Transverse colon (tissue), 4 donors: ENCODE measurements at regions of chr10 and their contacts with region 1.

Region 1: GRCh38 chr10:69728335-69728870 is 73.3 kb upstream of the COL13A1 start:
- DNase-seq: no peak
- H3K4me3 ChIP-seq: no peak overlapping the region
- H3K27ac ChIP-seq: no peak overlapping the region
- H3K4me1 ChIP-seq: peaks cover 0 to 8% (median 0%) of the 10 kb centered on the region in 4 donors
- H3K27me3 ChIP-seq: no peaks in the 10 kb centered on the region
- CTCF ChIP-seq: no peak
- EP300 ChIP-seq: no peak
- POLR2A ChIP-seq: no peak

Region 2: DNA sequence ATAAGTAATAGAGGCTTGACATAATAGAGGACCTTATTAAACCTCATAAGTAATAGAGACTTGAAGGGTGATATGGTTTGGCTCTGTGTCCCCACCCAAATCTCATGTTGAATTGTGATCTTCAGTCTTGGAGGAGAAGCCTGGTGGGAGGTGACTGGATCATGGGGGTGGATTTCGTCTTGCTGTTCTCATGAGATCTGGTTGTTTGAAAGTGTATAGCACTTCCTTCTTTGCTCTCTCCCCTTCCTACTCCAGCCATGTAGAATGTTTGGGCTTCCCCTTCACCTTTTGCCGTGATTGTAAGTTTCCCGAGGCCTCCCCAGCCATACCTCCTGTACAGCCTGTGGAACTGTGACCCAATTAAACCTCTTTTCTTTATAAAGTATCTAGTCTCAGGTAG is 731.2 kb before region 1 on chr10:
- in situ Hi-C with region 1: no loop called
- intact Hi-C with region 1: loop called (anchors 5 kb)
- DNase-seq: no peak
- H3K4me3 ChIP-seq: no peak overlapping the region
- H3K27ac ChIP-seq: no peak overlapping the region
- H3K4me1 ChIP-seq: peaks cover 0 to 15% (median 7%) of the 10 kb centered on the region in 4 donors
- H3K27me3 ChIP-seq: no peaks in the 10 kb centered on the region
- CTCF ChIP-seq: no peak
- EP300 ChIP-seq: no peak
- POLR2A ChIP-seq: no peak

Region 3: GRCh38 chr10:69479240-69480067 is 248.9 kb before region 1 on chr10:
- in situ Hi-C with region 1: no loop called
- intact Hi-C with region 1: no loop called
- DNase-seq: no peak
- H3K4me3 ChIP-seq: no peak overlapping the region
- H3K27ac ChIP-seq: peak overlapping the region; percentile 81 to 91 (median 87)
- H3K4me1 ChIP-seq: peaks cover 40 to 88% (median 49%) of the 10 kb centered on the region in 4 donors
- H3K27me3 ChIP-seq: no peaks in the 10 kb centered on the region
- CTCF ChIP-seq: no peak
- EP300 ChIP-seq: no peak
- POLR2A ChIP-seq: no peak

Region 4: GRCh38 chr10:69929575-69929974 is 201.2 kb after region 1 on chr10:
- in situ Hi-C with region 1: no loop called
- intact Hi-C with region 1: no loop called
- DNase-seq: no peak
- H3K4me3 ChIP-seq: no peak overlapping the region
- H3K27ac ChIP-seq: no peak overlapping the region
- H3K4me1 ChIP-seq: no peaks in the 10 kb centered on the region
- H3K27me3 ChIP-seq: no peaks in the 10 kb centered on the region
- CTCF ChIP-seq: no peak
- EP300 ChIP-seq: no peak
- POLR2A ChIP-seq: no peak

Region 5: GRCh38 chr10:70191972-70192305 is 463.5 kb after region 1 on chr10:
- in situ Hi-C with region 1: no loop called
- intact Hi-C with region 1: no loop called
- DNase-seq: no peak
- H3K4me3 ChIP-seq: no peak overlapping the region
- H3K27ac ChIP-seq: peak overlapping the region in 3 of 4 donors; percentile 38 to 59 (median 40)
- H3K4me1 ChIP-seq: peaks cover 0 to 7% (median 2%) of the 10 kb centered on the region in 4 donors
- H3K27me3 ChIP-seq: no peaks in the 10 kb centered on the region
- CTCF ChIP-seq: no peak
- EP300 ChIP-seq: no peak
- POLR2A ChIP-seq: no peak

Region 6: GRCh38 chr10:71638064-71638821 is 1909.8 kb after region 1 on chr10:
- in situ Hi-C with region 1: no loop called
- intact Hi-C with region 1: loop called (anchors 5 kb)
- DNase-seq: peak; percentile 76
- H3K4me3 ChIP-seq: no peak overlapping the region
- H3K27ac ChIP-seq: peak overlapping the region; percentile 69 to 87 (median 82)
- H3K4me1 ChIP-seq: peaks cover 16 to 55% (median 43%) of the 10 kb centered on the region in 4 donors
- H3K27me3 ChIP-seq: no peaks in the 10 kb centered on the region
- CTCF ChIP-seq: no peak
- EP300 ChIP-seq: no peak
- POLR2A ChIP-seq: peak; percentile 8